Mammary epithelial cell (primary cell): ENCODE measurements at regions of chr10 and their contacts with region 1.

Region 1: DNA sequence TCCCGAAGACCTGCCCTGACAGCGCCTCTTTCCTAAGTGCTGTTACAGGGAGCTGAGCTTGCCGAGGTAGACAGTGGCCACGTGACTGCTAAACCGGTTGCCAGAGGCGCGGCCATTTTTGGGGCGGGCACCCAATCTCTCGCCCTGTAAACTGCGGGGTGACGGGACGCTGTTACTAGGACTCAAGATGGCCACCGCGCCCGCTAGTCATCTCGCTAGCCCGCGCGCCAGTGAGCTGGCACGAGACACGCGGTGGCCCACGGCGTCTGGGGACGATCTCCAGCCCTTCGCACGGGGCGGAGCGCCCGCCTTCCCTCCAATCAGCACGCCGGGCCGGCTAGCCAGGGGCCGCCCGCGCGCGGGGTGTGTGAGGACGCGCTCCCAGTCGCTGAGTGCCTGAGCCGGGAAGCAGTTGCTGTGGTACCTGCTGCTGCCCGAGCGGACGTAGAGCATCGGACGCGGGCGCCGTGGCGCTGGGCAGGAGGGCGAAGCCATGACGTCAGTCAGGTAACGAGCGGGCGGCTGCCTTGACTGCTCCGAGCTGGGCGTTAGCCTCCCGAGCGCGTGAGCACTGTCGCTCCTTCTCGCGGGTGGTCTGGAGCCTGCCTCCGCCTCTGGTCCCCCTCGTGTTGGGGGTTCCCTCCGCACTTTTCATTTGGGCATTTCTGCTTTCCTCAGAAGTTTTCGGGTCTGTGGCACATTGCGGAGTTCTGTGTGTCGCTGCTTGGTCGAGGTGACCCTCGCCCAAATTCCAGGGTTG is 25.5 kb downstream of the ADK start:
- DNase-seq: peak; percentile 99
- H3K4me3 ChIP-seq: peak overlapping the region; percentile 73 to 77 (median 77)
- H3K27ac ChIP-seq: peak overlapping the region; percentile 99
- H3K4me1 ChIP-seq: peaks cover 20% of the 10 kb centered on the region
- H3K27me3 ChIP-seq: no peaks in the 10 kb centered on the region
- CTCF ChIP-seq: no peak

Region 2: DNA sequence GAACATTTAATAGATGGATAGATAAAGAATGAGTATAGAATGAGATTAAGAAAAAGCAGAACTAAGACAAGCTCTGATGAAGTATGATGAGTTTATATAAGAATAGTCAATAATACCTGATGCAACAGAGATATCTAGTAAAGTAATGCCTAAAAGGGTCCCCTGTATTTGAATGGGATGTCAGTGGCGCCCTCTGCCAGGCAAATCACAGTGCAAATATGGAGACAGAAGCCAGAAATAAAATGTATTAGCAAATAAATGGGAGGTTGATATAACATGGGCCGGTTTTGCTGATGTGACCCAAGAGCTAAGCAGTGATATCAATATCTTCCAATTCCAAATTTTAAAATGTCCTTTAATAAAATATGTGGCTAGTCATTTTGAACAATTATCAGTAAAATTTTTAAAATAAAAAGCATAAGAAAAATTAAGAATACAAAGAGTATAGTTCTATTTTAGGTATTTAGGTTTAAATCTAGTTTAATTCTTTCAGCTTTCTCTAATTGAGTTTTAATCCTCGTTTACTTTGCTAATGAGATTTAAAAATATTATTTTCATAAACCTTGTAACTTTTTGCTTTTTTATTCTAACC is 37.1 kb after region 1 on chr10:
- CTCF ChIA-PET with region 1: interaction called, 4 read pairs
- dilution Hi-C with region 1: no loop called
- in situ Hi-C with region 1: no loop called
- intact Hi-C with region 1: loop called (anchors 2 kb)
- DNase-seq: no peak
- H3K4me3 ChIP-seq: no peak overlapping the region
- H3K27ac ChIP-seq: no peak overlapping the region
- H3K4me1 ChIP-seq: peaks cover 6% of the 10 kb centered on the region
- H3K27me3 ChIP-seq: no peaks in the 10 kb centered on the region
- CTCF ChIP-seq: peak; percentile 46 to 63

Region 3: GRCh38 chr10:74223755-74224531 is 47.4 kb after region 1 on chr10:
- CTCF ChIA-PET with region 1: no interaction called
- dilution Hi-C with region 1: no loop called
- in situ Hi-C with region 1: no loop called
- intact Hi-C with region 1: loop called (anchors 2 kb)
- DNase-seq: peak; percentile 80
- H3K4me3 ChIP-seq: no peak overlapping the region
- H3K27ac ChIP-seq: peak overlapping the region; percentile 76
- H3K4me1 ChIP-seq: peaks cover 30% of the 10 kb centered on the region
- H3K27me3 ChIP-seq: no peaks in the 10 kb centered on the region
- CTCF ChIP-seq: no peak

Region 4: GRCh38 chr10:74400186-74400585 is 223.6 kb after region 1 on chr10:
- CTCF ChIA-PET with region 1: no interaction called
- dilution Hi-C with region 1: no loop called
- in situ Hi-C with region 1: no loop called
- intact Hi-C with region 1: no loop called
- DNase-seq: no peak
- H3K4me3 ChIP-seq: no peak overlapping the region
- H3K27ac ChIP-seq: no peak overlapping the region
- H3K4me1 ChIP-seq: no peaks in the 10 kb centered on the region
- H3K27me3 ChIP-seq: no peaks in the 10 kb centered on the region
- CTCF ChIP-seq: no peak

Region 5: DNA sequence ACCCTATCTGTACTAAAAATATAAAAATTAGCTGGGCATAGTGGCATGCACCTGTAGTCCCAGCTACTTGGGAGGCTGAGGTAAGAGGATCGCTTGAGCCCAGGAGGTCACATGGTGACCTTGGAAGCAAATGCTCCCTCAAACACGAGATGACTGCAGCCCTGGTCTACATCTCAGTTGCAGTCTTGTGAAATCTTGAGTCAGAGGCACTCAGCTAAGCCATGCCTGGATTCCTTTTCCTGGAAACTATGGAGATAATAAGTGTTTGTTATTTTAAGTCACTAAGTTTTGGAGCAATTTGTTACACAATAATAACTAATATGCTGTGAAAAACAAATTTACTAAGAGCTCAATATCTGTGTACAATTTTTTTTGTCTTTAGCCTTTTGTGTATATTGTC is 365.5 kb after region 1 on chr10:
- CTCF ChIA-PET with region 1: no interaction called
- dilution Hi-C with region 1: no loop called
- in situ Hi-C with region 1: no loop called
- intact Hi-C with region 1: no loop called
- DNase-seq: peak; percentile 9
- H3K4me3 ChIP-seq: no peak overlapping the region
- H3K27ac ChIP-seq: no peak overlapping the region
- H3K4me1 ChIP-seq: no peaks in the 10 kb centered on the region
- H3K27me3 ChIP-seq: no peaks in the 10 kb centered on the region
- CTCF ChIP-seq: no peak